SK-N-SH (cell line): ENCODE measurements at regions of chr14 and their contacts with region 1.

Region 1: DNA sequence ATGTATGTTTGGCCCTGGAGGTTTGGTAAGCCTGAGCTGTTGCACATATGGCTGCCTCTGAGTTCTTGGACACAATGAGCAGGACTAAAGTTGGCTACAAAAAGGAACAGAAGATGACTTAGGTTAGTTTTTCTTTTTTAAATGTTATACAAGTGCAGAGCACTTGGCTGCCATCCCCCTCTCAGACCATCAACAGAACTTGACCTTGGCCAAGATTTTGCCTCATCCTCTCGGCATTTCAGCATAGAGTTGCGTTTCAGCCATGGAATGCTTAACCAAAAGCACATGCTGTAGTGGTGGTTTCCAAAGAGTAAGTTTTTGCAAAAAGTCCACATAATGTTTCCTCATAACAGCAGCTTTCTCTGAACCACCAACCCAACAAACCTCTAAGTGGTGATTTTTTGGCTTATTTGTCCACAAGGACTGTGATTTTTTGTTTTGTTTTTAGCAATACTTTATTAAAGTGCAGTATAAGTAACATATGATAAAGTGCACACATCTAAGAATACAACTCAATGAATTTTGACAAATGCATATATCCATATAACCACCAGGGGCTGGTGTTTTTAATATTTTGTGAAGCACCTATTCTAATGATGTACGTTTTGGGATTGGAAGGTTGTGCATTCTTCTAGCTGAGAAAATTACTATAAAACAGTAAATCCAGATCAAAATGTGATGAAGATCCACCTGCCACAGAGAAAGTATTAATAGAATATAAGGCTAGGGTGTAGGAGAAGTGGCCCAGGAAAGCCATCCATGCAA is 12.1 kb upstream of the GALNT16 start:
- DNase-seq: no peak
- H3K4me3 ChIP-seq: no peak overlapping the region
- H3K27ac ChIP-seq: peak overlapping the region; percentile 67 to 73; a peak in 3 of 4 replicates
- H3K4me1 ChIP-seq: peaks cover 2 to 5% of the 10 kb centered on the region in 2 experiments; a peak in 3 of 4 replicates
- H3K27me3 ChIP-seq: no peaks in the 10 kb centered on the region
- CTCF ChIP-seq: peak; percentile 66
- EP300 ChIP-seq: peak in 1 of 2 experiments; percentile 60; a peak in 1 of 4 replicates
- RAD21 ChIP-seq: no peak

Region 2: GRCh38 chr14:68961781-68962584 is 285.9 kb before region 1 on chr14:
- CTCF ChIA-PET with region 1: no interaction called
- POLR2A ChIA-PET with region 1: no interaction called
- DNase-seq: peak; percentile 60
- H3K4me3 ChIP-seq: no peak overlapping the region
- H3K27ac ChIP-seq: peak overlapping the region; percentile 17 to 73; a peak in 3 of 4 replicates
- H3K4me1 ChIP-seq: peaks cover 60 to 71% of the 10 kb centered on the region in 2 experiments
- H3K27me3 ChIP-seq: no peaks in the 10 kb centered on the region
- CTCF ChIP-seq: no peak
- EP300 ChIP-seq: no peak
- RAD21 ChIP-seq: no peak

Region 3: DNA sequence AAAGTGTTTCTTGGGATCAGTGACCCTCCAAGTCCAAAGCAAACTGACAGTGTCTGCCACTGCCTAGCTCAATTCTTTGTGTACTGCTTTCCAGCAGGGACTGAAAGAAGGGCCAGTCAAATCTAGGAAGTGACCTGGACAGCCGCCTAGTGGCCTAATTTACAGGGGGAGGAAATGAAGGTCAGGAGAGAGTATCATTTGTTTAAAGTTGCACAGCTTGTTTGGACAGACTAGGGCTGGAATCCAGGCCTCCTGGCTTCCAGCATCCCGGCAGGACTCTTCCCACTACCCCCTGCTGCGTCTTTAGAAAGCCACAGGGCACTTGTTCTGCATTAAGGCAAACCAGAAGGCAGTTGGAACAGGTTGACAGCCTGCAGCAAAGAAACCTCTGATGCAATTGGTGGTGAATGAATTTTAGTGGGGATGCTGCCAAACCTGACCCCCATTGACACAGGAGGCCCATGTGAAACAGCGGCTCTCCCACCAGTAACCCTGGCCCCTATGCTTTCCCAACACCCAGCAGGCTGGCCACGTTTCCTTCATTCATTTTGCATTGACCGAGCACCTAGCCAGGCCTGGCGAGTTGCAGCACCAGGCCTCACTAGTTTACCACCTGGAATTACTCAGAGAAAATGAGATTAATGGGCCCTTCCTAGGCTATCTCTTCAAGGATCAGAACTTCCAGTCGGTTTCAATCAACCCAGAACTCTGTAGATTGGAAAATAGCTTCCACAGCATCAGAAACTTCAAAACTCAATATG is 40.3 kb after region 1 on chr14:
- CTCF ChIA-PET with region 1: interaction called, 13 read pairs
- POLR2A ChIA-PET with region 1: no interaction called
- DNase-seq: peak; percentile 50
- H3K4me3 ChIP-seq: no peak overlapping the region
- H3K27ac ChIP-seq: peak overlapping the region in 1 of 2 experiments; percentile 54; a peak in 2 of 4 replicates
- H3K4me1 ChIP-seq: peaks cover 0 to 27% of the 10 kb centered on the region in 2 experiments; a peak in 2 of 4 replicates
- H3K27me3 ChIP-seq: no peaks in the 10 kb centered on the region
- CTCF ChIP-seq: peak; percentile 56
- EP300 ChIP-seq: peak in 1 of 2 experiments; percentile 32; a peak in 1 of 4 replicates
- RAD21 ChIP-seq: peak; percentile 46

Region 4: DNA sequence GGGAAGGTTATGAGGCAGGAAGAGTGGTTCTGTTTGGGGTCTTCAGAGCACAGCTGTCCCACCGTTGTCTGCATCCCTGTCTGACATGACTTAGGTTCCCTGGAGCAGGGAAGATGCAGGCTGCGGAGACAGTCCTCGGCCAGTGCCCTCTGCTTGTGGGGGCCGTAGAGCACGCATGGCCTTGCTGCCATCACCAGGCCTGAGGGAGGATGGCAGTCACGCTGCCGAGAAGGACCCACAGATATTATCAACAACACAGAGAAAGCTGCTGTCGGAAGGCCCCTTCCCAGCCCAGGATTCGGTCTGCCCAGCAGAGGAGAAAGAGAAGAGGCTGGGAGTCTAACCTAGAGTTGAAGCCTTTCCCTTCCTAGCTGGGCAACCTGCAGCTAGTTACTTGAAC is 115.2 kb after region 1 on chr14:
- CTCF ChIA-PET with region 1: interaction called, 92 read pairs
- POLR2A ChIA-PET with region 1: no interaction called
- DNase-seq: peak; percentile 78
- H3K4me3 ChIP-seq: no peak overlapping the region
- H3K27ac ChIP-seq: no peak overlapping the region
- H3K4me1 ChIP-seq: peaks cover 0 to 7% of the 10 kb centered on the region in 2 experiments; a peak in 1 of 4 replicates
- H3K27me3 ChIP-seq: no peaks in the 10 kb centered on the region
- CTCF ChIP-seq: peak; percentile 54
- EP300 ChIP-seq: no peak
- RAD21 ChIP-seq: peak; percentile 84

Region 5: GRCh38 chr14:69460093-69460701 is 212.3 kb after region 1 on chr14:
- CTCF ChIA-PET with region 1: interaction called, 32 read pairs
- POLR2A ChIA-PET with region 1: no interaction called
- DNase-seq: peak; percentile 70
- H3K4me3 ChIP-seq: no peak overlapping the region; a peak in 1 of 4 replicates
- H3K27ac ChIP-seq: peak overlapping the region in 1 of 2 experiments; percentile 47; a peak in 1 of 4 replicates
- H3K4me1 ChIP-seq: peaks cover 0 to 6% of the 10 kb centered on the region in 2 experiments; a peak in 1 of 4 replicates
- H3K27me3 ChIP-seq: no peaks in the 10 kb centered on the region
- CTCF ChIP-seq: peak; percentile 87
- EP300 ChIP-seq: no peak
- RAD21 ChIP-seq: peak; percentile 84

Region 6: DNA sequence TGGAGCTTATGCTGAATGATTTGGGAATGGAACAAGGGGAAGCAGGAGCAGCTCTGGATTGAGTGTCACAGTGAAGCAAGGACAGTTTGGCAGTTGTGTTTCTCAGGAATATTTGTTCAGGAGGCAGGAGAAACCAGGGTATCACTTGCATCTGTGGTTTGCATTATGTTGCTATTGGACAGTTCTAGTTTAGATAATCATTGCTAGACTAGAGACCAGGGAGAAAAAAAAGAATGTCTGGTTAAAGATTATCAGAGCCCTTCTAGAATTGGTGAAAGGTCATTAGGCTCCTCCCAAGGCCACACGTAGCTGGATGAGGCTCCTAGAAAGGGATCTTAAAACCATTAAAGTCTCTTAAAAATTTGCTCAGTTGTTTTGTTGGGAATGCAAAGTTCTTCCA is 502.1 kb after region 1 on chr14:
- CTCF ChIA-PET with region 1: no interaction called
- POLR2A ChIA-PET with region 1: no interaction called
- DNase-seq: no peak
- H3K4me3 ChIP-seq: no peak overlapping the region
- H3K27ac ChIP-seq: no peak overlapping the region
- H3K4me1 ChIP-seq: no peaks in the 10 kb centered on the region
- H3K27me3 ChIP-seq: no peaks in the 10 kb centered on the region
- CTCF ChIP-seq: no peak
- EP300 ChIP-seq: no peak
- RAD21 ChIP-seq: no peak